Esophagus muscularis mucosa (tissue), 4 donors: ENCODE measurements at regions of chr2 and their contacts with region 1.

Region 1: DNA sequence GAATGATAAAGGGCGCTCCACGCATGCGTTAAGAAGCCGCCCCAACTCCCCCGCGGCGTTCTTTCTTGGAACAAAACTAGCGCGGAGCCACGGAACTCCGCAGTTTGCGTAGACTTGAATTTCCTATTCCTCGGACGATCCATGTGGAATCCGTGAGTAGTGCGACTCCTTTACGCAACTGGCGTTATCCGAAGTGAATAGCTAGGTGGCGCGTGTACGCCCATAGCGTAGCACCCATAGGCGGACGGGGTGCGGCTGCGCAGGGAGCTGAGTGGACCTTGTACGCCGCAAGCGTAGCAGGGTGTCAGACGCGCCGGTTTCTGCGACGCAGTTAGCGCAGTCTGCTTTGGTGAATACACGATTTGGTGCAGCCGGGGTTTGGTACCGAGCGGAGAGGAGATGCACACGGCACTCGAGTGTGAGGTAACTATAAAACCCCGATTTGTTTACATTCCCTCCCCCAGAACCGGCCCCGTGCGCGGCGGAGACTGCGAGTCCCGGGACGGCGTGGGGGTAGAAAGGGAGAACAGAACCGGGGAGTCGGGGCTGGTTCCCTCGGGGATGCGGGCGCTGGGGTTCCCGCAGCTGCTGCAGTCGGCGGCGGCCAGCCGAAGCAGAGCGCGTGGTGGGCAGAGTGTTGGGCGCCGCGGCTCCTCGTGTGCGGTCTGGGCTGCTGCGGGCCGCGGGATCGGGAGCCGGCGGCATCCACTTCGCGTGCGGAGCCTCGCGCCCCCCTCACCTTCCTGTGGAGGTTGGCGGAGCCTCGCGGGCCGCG is at the start of gene SLC39A10:
- DNase-seq: peak; percentile 99
- H3K4me3 ChIP-seq: peak within 1 kb of the TSS; percentile 95 to 99 (median 98)
- H3K27ac ChIP-seq: peak within 1 kb of the TSS; percentile 99 to 100 (median 100)
- H3K4me1 ChIP-seq: peaks cover 6 to 34% (median 32%) of the 10 kb centered on the region in 4 donors
- H3K27me3 ChIP-seq: no peaks in the 10 kb centered on the region
- CTCF ChIP-seq: peak in 2 of 3 experiments; percentile 22 to 41
- EP300 ChIP-seq: no peak
- POLR2A ChIP-seq: peak; percentile 82
- total RNA-seq, gene SLC39A10: 7.1 to 9.5 (median 8.3) TPM

Region 2: DNA sequence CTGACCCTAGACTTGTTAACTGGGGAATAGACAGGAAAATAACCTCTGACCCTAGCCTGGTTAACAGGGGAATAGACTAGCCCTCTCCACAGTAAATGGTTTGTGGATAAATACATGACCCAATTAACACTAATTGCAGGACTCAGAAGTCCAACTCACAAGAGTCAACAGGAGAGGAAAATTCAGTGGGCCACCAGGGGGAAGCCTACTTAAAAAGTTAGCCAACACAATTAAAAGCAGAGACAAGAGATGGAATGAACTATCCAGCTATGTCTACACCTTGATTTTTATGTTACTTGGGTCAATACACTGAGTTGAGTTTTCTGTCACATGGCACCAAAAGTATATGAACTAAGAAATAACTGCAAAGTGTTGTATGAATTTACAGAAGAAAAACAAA is 158.9 kb before region 1 on chr2:
- intact Hi-C with region 1: loop called (anchors 5 kb)
- DNase-seq: no peak
- H3K4me3 ChIP-seq: no peak overlapping the region
- H3K27ac ChIP-seq: no peak overlapping the region
- H3K4me1 ChIP-seq: no peaks in the 10 kb centered on the region
- H3K27me3 ChIP-seq: no peaks in the 10 kb centered on the region
- CTCF ChIP-seq: peak; percentile 37 to 47 (median 43)
- EP300 ChIP-seq: no peak
- POLR2A ChIP-seq: no peak

Region 3: GRCh38 chr2:195575879-195576401 is 81.1 kb before region 1 on chr2:
- intact Hi-C with region 1: loop called (anchors 5 kb)
- DNase-seq: no peak
- H3K4me3 ChIP-seq: no peak overlapping the region
- H3K27ac ChIP-seq: no peak overlapping the region
- H3K4me1 ChIP-seq: peaks cover 0 to 5% (median 4%) of the 10 kb centered on the region in 4 donors
- H3K27me3 ChIP-seq: no peaks in the 10 kb centered on the region
- CTCF ChIP-seq: peak in 2 of 3 experiments; percentile 11 to 18
- EP300 ChIP-seq: no peak
- POLR2A ChIP-seq: no peak

Region 4: GRCh38 chr2:195879153-195879552 is 222.1 kb after region 1 on chr2:
- intact Hi-C with region 1: no loop called
- DNase-seq: no peak
- H3K4me3 ChIP-seq: no peak overlapping the region
- H3K27ac ChIP-seq: no peak overlapping the region
- H3K4me1 ChIP-seq: no peaks in the 10 kb centered on the region
- H3K27me3 ChIP-seq: no peaks in the 10 kb centered on the region
- CTCF ChIP-seq: no peak
- EP300 ChIP-seq: no peak
- POLR2A ChIP-seq: no peak